Activated T-helper 2 cell treated with anti-CD3 and anti-CD28 coated beads, Interferon-gamma antibody, Interleukin-2, Interleukin-4, amounts not matched to agents 10 μg/mL and 5 μg/mL and 100 μg/mL, durations not matched to agents 14 hours and 24 hours and 36 hours (primary cell): ENCODE measurements at regions of chr9 and their contacts with region 1.

Region 1: DNA sequence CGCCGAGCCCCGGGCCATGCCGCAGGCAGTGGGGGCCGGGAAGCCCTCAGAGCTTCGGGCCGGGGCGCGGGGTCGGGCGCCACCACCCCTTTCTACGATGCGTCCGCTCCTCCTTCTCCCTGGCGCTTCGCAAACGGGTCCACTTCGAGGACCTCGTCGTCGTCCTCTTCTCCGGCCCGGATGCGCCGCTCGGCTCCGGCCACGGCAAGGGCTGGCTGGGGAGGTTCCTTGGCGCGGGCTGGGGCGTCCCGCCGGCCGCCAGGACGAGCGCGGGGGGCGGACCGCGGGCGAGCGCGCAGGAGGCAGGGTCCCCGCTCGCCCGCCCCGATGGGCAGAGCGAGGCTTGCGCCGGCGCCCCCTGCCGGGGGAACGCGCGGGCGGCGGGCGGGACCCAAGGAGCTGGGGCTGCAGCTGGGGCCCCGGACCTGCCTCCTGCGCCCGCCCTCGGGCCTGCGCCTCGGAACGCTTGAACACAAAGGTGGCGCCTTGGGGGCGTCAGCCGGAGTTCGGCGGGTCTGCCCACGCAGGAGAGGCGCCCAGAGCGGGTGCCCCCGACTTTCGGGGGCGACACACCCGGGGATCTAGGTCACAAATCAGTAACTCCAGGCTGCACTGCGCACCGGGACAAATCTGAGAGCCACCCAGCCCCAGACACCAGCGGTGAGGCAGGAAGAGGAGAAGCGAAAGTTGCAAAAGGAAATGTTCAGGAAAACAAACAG is at the start of gene ROR2:
- DNase-seq: peak; percentile 51
- H3K4me3 Mint-ChIP-seq: peak within 1 kb of the TSS; percentile 66
- H3K27ac Mint-ChIP-seq: no peak within 1 kb of the TSS
- H3K4me1 Mint-ChIP-seq: peaks cover 4% of the 10 kb centered on the region
- H3K27me3 Mint-ChIP-seq: peaks cover 70% of the 10 kb centered on the region
- total RNA-seq, gene ROR2: not detected in 2 replicates

Region 2: DNA sequence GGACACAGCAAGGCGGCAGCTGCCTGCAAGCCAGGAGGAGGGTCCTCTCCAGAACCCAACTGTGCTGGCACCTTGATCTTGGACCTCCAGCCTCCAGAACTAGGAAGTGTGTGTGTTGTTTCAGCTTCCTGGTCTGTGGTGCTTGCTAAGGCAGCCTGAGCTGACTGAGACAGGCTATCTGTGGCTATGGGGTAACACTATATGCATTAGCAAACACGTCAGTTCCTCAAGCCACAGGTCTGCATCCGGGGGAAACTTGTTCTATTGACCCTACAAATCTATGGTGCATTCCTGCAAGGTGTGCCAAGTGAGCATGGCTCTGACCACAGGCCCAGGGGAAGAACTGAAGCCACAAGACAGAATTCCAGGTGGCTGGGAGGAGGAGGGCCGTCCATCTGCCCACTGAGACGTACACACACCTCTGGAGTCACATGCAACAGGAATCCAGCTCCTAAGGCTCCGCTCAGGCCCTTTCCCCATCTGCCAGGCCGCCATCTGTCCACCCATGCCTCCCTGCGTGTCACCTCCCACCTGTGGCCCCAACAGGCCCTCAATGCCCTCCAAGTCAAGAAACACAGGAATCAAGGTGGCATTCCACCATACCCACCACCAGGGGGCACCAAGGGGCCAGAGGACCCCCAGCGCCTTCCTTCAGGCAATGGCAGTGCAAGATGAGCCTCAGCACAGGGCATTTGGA is 174.9 kb before region 1 on chr9:
- intact Hi-C with region 1: loop called (anchors 5 kb)
- DNase-seq: peak; percentile 38
- H3K4me3 Mint-ChIP-seq: no peak overlapping the region
- H3K27ac Mint-ChIP-seq: no peak overlapping the region
- H3K4me1 Mint-ChIP-seq: no peaks in the 10 kb centered on the region
- H3K27me3 Mint-ChIP-seq: peaks cover 19% of the 10 kb centered on the region

Region 3: DNA sequence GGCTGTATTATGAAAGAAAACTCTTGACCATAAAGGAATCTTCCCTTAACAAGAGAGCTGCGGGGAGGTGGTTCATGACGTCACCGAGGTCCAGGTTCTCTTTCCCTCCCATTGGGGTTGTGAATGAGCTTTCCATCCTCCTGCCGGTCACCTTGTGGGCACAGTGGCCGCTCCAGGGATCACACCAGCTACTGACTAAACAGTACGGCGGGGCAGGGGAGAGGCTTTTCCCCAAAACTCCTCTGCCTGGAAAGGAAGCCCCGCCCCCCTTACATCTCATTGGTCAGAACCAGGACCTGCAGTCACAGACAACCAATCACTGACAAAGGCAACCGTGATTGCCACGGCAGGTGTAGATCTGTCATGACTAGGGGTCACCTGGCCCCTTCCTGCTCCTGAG is 35.7 kb before region 1 on chr9:
- intact Hi-C with region 1: no loop called
- DNase-seq: no peak
- H3K4me3 Mint-ChIP-seq: no peak overlapping the region
- H3K27ac Mint-ChIP-seq: no peak overlapping the region
- H3K4me1 Mint-ChIP-seq: no peaks in the 10 kb centered on the region
- H3K27me3 Mint-ChIP-seq: peaks cover 12% of the 10 kb centered on the region

Region 4: GRCh38 chr9:92133949-92134604 is 184.0 kb after region 1 on chr9:
- intact Hi-C with region 1: no loop called
- DNase-seq: peak; percentile 67
- H3K4me3 Mint-ChIP-seq: peak overlapping the region; percentile 57
- H3K27ac Mint-ChIP-seq: no peak overlapping the region
- H3K4me1 Mint-ChIP-seq: peaks cover 6% of the 10 kb centered on the region
- H3K27me3 Mint-ChIP-seq: peaks cover 22% of the 10 kb centered on the region